ENCODE measurements at regions of chr17 and their contacts with region 1.

Region 1: GRCh38 chr17:63478791-63479494 is 2.1 kb downstream of the ACE start:
- DNase-seq: peak; percentile 89
- ATAC-seq: peak; percentile 92
- H3K4me3 Mint-ChIP-seq: no peak overlapping the region
- H3K27ac Mint-ChIP-seq: no peak overlapping the region
- H3K4me1 Mint-ChIP-seq: peaks cover 12% of the 10 kb centered on the region
- H3K27me3 Mint-ChIP-seq: peaks cover 27% of the 10 kb centered on the region

Region 2: GRCh38 chr17:63196772-63197335 is 282.1 kb before region 1 on chr17:
- CTCF ChIA-PET with region 1: no interaction called
- POLR2A ChIA-PET with region 1: no interaction called
- intact Hi-C with region 1: no loop called
- DNase-seq: no peak
- ATAC-seq: no peak
- H3K4me3 Mint-ChIP-seq: no peak overlapping the region
- H3K27ac Mint-ChIP-seq: no peak overlapping the region
- H3K4me1 Mint-ChIP-seq: peaks cover 6% of the 10 kb centered on the region
- H3K27me3 Mint-ChIP-seq: no peaks in the 10 kb centered on the region

Region 3: DNA sequence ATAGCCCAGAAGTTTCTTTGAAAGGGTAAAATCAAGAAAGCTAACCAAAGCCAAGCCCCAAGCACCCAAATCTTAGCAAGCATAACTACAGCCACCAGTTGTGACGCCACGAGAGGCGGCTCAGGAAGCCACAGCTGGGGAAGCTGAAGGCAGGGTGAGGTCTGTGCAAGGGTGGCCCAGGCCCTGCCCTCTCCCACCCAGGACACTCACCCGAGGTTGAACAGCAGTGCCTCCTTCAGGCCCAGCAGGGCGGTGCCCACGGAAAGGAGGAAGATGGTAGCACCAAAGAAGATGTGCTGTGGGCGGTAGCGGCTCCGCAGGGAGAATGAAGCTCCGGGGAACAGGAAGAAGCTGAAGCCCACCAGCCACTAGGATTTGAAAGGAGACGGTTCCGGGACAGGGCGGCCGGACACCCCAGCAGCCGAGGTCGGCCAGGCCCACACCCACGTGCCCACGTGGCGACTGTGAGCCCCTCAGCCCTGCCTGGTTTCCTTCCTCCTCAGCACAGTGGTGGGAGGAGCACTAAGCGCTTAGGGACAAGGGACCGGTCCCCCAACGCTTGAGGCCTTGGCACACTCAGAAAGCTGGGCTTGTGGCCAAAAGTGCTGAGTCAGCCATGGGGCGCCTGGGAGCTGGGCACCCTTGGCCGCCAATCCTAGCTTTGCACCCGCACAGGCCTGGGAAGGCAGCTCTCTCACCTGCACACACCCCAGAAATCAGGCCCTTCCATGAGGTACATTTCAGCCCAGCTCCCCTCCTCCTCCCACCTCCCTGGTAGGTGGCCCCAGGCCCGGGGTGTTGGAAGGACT is 43.9 kb before region 1 on chr17:
- CTCF ChIA-PET with region 1: interaction called, 10 read pairs
- POLR2A ChIA-PET with region 1: no interaction called
- intact Hi-C with region 1: loop called in 1 of 2 experiments (anchors 5 kb)
- DNase-seq: peak; percentile 46
- ATAC-seq: no peak
- H3K4me3 Mint-ChIP-seq: no peak overlapping the region
- H3K27ac Mint-ChIP-seq: peak overlapping the region; percentile 12
- H3K4me1 Mint-ChIP-seq: peaks cover 16% of the 10 kb centered on the region
- H3K27me3 Mint-ChIP-seq: no peaks in the 10 kb centered on the region

Region 4: GRCh38 chr17:63445979-63446691 is 32.8 kb before region 1 on chr17 and contains the start of gene CYB561:
- CTCF ChIA-PET with region 1: no interaction called
- POLR2A ChIA-PET with region 1: no interaction called
- intact Hi-C with region 1: loop called in 1 of 2 experiments (anchors 5 kb)
- DNase-seq: peak; percentile 81
- ATAC-seq: peak; percentile 69
- H3K4me3 Mint-ChIP-seq: peak within 1 kb of the TSS; percentile 60
- H3K27ac Mint-ChIP-seq: peak within 1 kb of the TSS; percentile 72
- H3K4me1 Mint-ChIP-seq: peaks cover 23% of the 10 kb centered on the region
- H3K27me3 Mint-ChIP-seq: peaks cover 3% of the 10 kb centered on the region
- total RNA-seq, gene CYB561: 2.5 to 3.0 TPM

Region 5: GRCh38 chr17:63587770-63588169 is 108.8 kb after region 1 on chr17:
- CTCF ChIA-PET with region 1: no interaction called
- POLR2A ChIA-PET with region 1: no interaction called
- intact Hi-C with region 1: no loop called
- DNase-seq: peak; percentile 0
- ATAC-seq: no peak
- H3K4me3 Mint-ChIP-seq: no peak overlapping the region
- H3K27ac Mint-ChIP-seq: no peak overlapping the region
- H3K4me1 Mint-ChIP-seq: peaks cover 12% of the 10 kb centered on the region
- H3K27me3 Mint-ChIP-seq: no peaks in the 10 kb centered on the region